Activated T-helper 1 cell treated with anti-CD3 and anti-CD28 coated beads, Interleukin-12 subunit alpha, Interleukin-12 subunit beta, Interleukin-2, Interleukin-4 antibody, amounts not matched to agents 30 ng/mL and 10 ng/mL and 1 ng/mL, durations not matched to agents 14 hours and 24 hours and 36 hours (primary cell): ENCODE measurements at regions of chr17 and their contacts with region 1.

Region 1: DNA sequence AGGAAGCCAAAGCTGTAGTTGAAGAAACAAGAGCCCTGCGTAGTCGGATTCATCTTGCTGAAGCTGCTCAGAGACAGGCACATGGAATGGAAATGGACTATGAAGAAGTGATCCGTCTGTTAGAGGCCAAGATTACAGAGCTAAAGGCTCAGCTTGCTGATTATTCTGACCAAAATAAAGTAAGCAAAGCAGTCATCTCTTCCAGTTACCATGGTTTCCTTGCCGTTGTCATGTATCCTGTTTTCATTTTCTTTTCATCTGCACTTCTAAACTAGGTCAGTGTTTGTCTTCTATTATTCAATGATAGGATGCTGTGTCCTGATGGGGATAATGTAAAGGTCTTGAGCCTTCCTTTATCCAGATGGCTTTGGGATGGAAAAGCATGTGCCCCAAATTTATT is 104.3 kb downstream of the STXBP4 start:
- DNase-seq: no peak
- H3K4me3 Mint-ChIP-seq: no peak overlapping the region
- H3K27ac Mint-ChIP-seq: peak overlapping the region; percentile 60
- H3K4me1 Mint-ChIP-seq: peaks cover 8% of the 10 kb centered on the region
- H3K27me3 Mint-ChIP-seq: no peaks in the 10 kb centered on the region

Region 2: GRCh38 chr17:54982399-54982798 is 90.5 kb before region 1 on chr17:
- intact Hi-C with region 1: no loop called
- DNase-seq: no peak
- H3K4me3 Mint-ChIP-seq: no peak overlapping the region
- H3K27ac Mint-ChIP-seq: no peak overlapping the region
- H3K4me1 Mint-ChIP-seq: peaks cover 6% of the 10 kb centered on the region
- H3K27me3 Mint-ChIP-seq: no peaks in the 10 kb centered on the region

Region 3: GRCh38 chr17:55090079-55090492 is 17.2 kb after region 1 on chr17:
- intact Hi-C with region 1: loop called (anchors 2 kb)
- DNase-seq: peak; percentile 59
- H3K4me3 Mint-ChIP-seq: peak overlapping the region; percentile 46
- H3K27ac Mint-ChIP-seq: peak overlapping the region; percentile 86
- H3K4me1 Mint-ChIP-seq: peaks cover 19% of the 10 kb centered on the region
- H3K27me3 Mint-ChIP-seq: no peaks in the 10 kb centered on the region